HepG2 (cell line): ENCODE measurements at regions of chr1 and their contacts with region 1.

Region 1: GRCh38 chr1:29230553-29231378 is at the start of gene MECR:
- DNase-seq: peak; percentile 83
- ATAC-seq: peak; percentile 94
- H3K4me3 ChIP-seq: peak within 1 kb of the TSS; percentile 72 to 83 (median 82)
- H3K27ac ChIP-seq: peak within 1 kb of the TSS; percentile 43
- H3K4me1 ChIP-seq: peaks cover 56% of the 10 kb centered on the region
- H3K27me3 ChIP-seq: peaks cover 0 to 17% of the 10 kb centered on the region in 2 experiments; a peak in 1 of 5 replicates
- CTCF ChIP-seq: peak; percentile 75
- EP300 ChIP-seq: 0 out of 4 replicates have a peak, but pooled peaks of 1 of the 2 experiments have one; percentile 26
- POLR2A ChIP-seq: peak in 1 of 2 experiments; percentile 82; a peak in 2 of 4 replicates
- RAD21 ChIP-seq: no peak
- total RNA-seq, gene MECR: 21.2 and 24.9 TPM in 2 replicates

Region 2: DNA sequence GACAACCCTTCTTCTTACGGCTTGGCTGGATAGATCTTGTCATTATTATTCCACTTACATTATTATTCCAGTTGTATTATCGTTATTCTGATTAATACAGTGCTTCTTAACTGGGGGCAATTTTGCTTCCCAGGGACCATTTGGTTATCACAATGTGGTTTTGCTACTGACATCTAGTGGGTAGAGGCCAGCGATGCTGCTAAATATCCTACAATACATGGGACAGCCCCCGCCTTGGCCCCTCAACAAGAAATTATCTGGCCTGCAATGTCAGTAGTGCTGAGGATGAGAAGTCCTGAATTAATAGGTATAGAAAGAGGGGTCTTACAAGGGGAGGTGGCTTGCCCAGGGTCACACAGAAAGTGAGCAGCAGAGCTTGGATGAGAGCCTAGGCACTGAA is 111.2 kb after region 1 on chr1:
- CTCF ChIA-PET with region 1: interaction called, 3 read pairs
- POLR2A ChIA-PET with region 1: no interaction called
- in situ Hi-C with region 1: no loop called
- intact Hi-C with region 1: loop called (anchors 10 kb)
- DNase-seq: no peak
- ATAC-seq: peak; percentile 39; the same call in 2 of the 3 replicates
- H3K4me3 ChIP-seq: no peak overlapping the region
- H3K27ac ChIP-seq: no peak overlapping the region
- H3K4me1 ChIP-seq: no peaks in the 10 kb centered on the region
- H3K27me3 ChIP-seq: peaks cover 2 to 31% of the 10 kb centered on the region in 2 experiments; a peak in 4 of 5 replicates
- CTCF ChIP-seq: 0 out of 2 replicates have a peak, but pooled peaks have one; percentile 13
- EP300 ChIP-seq: no peak
- POLR2A ChIP-seq: no peak
- RAD21 ChIP-seq: no peak

Region 3: GRCh38 chr1:29453502-29454240 is 222.9 kb after region 1 on chr1:
- CTCF ChIA-PET with region 1: interaction called, 9 read pairs
- POLR2A ChIA-PET with region 1: no interaction called
- in situ Hi-C with region 1: loop called (anchors 10 kb)
- intact Hi-C with region 1: no loop called
- DNase-seq: peak; percentile 70
- ATAC-seq: peak; percentile 70
- H3K4me3 ChIP-seq: peak overlapping the region in 1 of 3 experiments; percentile 41; a peak in 1 of 6 replicates
- H3K27ac ChIP-seq: no peak overlapping the region
- H3K4me1 ChIP-seq: peaks cover 30% of the 10 kb centered on the region
- H3K27me3 ChIP-seq: no peaks in the 10 kb centered on the region; a peak in 1 of 5 replicates
- CTCF ChIP-seq: peak; percentile 57
- EP300 ChIP-seq: no peak
- POLR2A ChIP-seq: no peak
- RAD21 ChIP-seq: no peak

Region 4: DNA sequence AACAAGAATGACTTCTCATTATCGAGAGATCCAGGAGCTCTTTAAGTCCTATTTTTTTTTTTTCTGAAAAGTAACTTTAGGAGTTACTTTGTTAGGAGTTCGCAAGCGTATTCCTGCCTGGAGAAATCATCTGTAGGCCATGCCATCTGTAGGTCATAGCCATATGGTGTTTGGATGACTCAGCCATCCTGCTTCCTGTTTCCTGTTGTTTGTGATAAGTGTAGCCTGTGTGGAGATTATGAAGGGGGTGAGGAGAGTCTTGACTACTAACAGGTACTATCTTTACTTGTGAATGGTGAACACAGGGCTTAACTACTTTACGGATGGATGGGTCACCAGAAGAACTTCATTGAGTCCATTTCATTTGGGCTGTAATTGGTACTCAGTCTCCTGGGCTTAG is 332.8 kb after region 1 on chr1:
- CTCF ChIA-PET with region 1: no interaction called
- POLR2A ChIA-PET with region 1: no interaction called
- in situ Hi-C with region 1: no loop called
- intact Hi-C with region 1: no loop called
- DNase-seq: no peak
- ATAC-seq: no peak
- H3K4me3 ChIP-seq: no peak overlapping the region
- H3K27ac ChIP-seq: no peak overlapping the region
- H3K4me1 ChIP-seq: no peaks in the 10 kb centered on the region
- H3K27me3 ChIP-seq: no peaks in the 10 kb centered on the region
- CTCF ChIP-seq: no peak
- EP300 ChIP-seq: no peak
- POLR2A ChIP-seq: no peak
- RAD21 ChIP-seq: no peak

Region 5: GRCh38 chr1:29849038-29849750 is 618.4 kb after region 1 on chr1:
- CTCF ChIA-PET with region 1: no interaction called
- POLR2A ChIA-PET with region 1: no interaction called
- in situ Hi-C with region 1: loop called (anchors 10 kb)
- intact Hi-C with region 1: no loop called
- DNase-seq: peak; percentile 32
- ATAC-seq: peak; percentile 35; the same call in 2 of the 3 replicates
- H3K4me3 ChIP-seq: no peak overlapping the region
- H3K27ac ChIP-seq: no peak overlapping the region
- H3K4me1 ChIP-seq: no peaks in the 10 kb centered on the region
- H3K27me3 ChIP-seq: peaks cover 0 to 3% of the 10 kb centered on the region in 2 experiments; a peak in 1 of 5 replicates
- CTCF ChIP-seq: peak; percentile 54
- EP300 ChIP-seq: no peak
- POLR2A ChIP-seq: no peak
- RAD21 ChIP-seq: no peak

Region 6: DNA sequence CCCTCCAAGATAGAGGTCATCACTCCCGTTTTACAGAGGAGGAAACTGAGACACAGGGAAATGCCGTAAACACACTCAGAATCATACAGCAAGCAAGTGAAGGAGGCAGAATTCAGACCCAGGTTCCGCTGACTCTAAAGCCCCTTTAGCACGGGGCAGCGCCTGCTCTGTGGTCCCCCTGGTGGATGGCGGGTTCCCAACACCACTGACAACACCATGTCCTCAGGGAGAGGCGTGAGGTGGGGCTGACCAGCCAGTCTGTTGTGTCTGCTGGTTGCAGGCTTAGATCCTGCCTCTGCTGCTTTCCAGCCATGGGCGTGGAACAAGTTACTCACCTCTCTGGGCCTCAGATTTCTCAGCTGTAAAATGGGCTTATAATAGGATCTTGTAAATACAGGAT is 875.4 kb after region 1 on chr1:
- CTCF ChIA-PET with region 1: no interaction called
- POLR2A ChIA-PET with region 1: no interaction called
- in situ Hi-C with region 1: loop called (anchors 10 kb)
- intact Hi-C with region 1: no loop called
- DNase-seq: peak; percentile 25
- ATAC-seq: peak; percentile 98
- H3K4me3 ChIP-seq: no peak overlapping the region
- H3K27ac ChIP-seq: no peak overlapping the region
- H3K4me1 ChIP-seq: no peaks in the 10 kb centered on the region
- H3K27me3 ChIP-seq: peaks cover 1 to 12% of the 10 kb centered on the region in 2 experiments
- CTCF ChIP-seq: peak; percentile 71
- EP300 ChIP-seq: no peak
- POLR2A ChIP-seq: no peak
- RAD21 ChIP-seq: no peak

Region 7: GRCh38 chr1:30707412-30708360 is 1476.9 kb after region 1 on chr1:
- CTCF ChIA-PET with region 1: no interaction called
- POLR2A ChIA-PET with region 1: no interaction called
- in situ Hi-C with region 1: no loop called
- intact Hi-C with region 1: loop called (anchors 10 kb)
- DNase-seq: peak; percentile 38
- ATAC-seq: peak; percentile 90
- H3K4me3 ChIP-seq: no peak overlapping the region
- H3K27ac ChIP-seq: no peak overlapping the region
- H3K4me1 ChIP-seq: no peaks in the 10 kb centered on the region
- H3K27me3 ChIP-seq: peaks cover 1 to 15% of the 10 kb centered on the region in 2 experiments; a peak in 2 of 5 replicates
- CTCF ChIP-seq: peak; percentile 94
- EP300 ChIP-seq: no peak
- POLR2A ChIP-seq: no peak
- RAD21 ChIP-seq: peak; percentile 96